ENCODE measurements at regions of chr1 and their contacts with region 1.

Region 1: GRCh38 chr1:18922319-18922726 is 20.0 kb upstream of the ALDH4A1 start:
- DNase-seq: peak in 1 of 2 donors; percentile 96
- H3K4me3 ChIP-seq: peak overlapping the region in 1 of 2 donors; percentile 6
- H3K27ac ChIP-seq: peak overlapping the region; percentile 98
- H3K4me1 ChIP-seq: peaks cover 58% of the 10 kb centered on the region
- H3K27me3 ChIP-seq: no peaks in the 10 kb centered on the region
- CTCF ChIP-seq: peak in 1 of 3 experiments; percentile 34
- POLR2A ChIP-seq: peak in 1 of 2 donors; percentile 46

Region 2: DNA sequence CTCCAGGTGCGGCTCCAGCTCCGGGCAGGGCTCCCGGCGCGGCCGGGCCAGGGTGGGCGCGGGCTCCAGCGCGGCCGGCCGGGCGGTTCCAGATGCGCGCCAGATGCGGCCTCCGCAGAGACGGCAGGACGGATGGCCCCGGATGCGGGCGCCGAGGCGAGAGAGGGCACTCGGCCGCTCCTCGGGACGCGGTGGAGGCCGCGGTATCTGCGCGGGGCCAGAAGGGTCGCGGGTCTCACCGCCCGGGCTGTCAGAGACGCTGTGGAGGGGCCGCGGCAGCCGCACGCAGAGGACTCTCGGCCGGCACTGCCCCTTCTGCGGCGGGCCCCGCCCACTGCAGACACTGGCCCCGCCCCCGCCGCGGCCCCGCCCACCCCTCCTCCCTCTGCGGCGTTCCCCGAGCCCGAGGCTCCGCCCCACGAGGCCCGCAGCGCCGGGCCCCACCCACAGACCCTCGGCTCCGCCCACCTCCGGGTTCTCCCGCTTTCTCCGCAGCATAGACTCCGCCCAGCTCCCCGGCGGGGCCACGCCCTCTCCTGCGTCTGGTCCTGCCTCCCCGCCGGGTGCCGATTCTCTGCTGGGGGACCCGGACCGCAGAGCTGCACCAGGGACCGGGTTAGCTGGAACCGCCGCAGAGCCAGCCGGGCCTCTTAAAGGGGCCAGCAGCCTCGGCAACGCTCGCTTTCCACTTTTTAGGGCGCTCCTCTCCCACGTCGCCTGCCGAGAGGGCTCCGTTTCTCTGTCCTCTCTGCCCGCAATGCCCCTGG is 34.2 kb after region 1 on chr1 and contains the start of gene IFFO2:
- intact Hi-C with region 1: loop called (anchors 5 kb)
- DNase-seq: peak in 1 of 2 donors; percentile 96
- H3K4me3 ChIP-seq: peak within 1 kb of the TSS; percentile 77 to 100
- H3K27ac ChIP-seq: peak within 1 kb of the TSS; percentile 87
- H3K4me1 ChIP-seq: peaks cover 48% of the 10 kb centered on the region
- H3K27me3 ChIP-seq: no peaks in the 10 kb centered on the region
- CTCF ChIP-seq: no peak
- POLR2A ChIP-seq: peak; percentile 73 to 97
- total RNA-seq, gene IFFO2: 34.6 TPM